ENCODE measurements at regions of chr3 and their contacts with region 1.

Region 1: DNA sequence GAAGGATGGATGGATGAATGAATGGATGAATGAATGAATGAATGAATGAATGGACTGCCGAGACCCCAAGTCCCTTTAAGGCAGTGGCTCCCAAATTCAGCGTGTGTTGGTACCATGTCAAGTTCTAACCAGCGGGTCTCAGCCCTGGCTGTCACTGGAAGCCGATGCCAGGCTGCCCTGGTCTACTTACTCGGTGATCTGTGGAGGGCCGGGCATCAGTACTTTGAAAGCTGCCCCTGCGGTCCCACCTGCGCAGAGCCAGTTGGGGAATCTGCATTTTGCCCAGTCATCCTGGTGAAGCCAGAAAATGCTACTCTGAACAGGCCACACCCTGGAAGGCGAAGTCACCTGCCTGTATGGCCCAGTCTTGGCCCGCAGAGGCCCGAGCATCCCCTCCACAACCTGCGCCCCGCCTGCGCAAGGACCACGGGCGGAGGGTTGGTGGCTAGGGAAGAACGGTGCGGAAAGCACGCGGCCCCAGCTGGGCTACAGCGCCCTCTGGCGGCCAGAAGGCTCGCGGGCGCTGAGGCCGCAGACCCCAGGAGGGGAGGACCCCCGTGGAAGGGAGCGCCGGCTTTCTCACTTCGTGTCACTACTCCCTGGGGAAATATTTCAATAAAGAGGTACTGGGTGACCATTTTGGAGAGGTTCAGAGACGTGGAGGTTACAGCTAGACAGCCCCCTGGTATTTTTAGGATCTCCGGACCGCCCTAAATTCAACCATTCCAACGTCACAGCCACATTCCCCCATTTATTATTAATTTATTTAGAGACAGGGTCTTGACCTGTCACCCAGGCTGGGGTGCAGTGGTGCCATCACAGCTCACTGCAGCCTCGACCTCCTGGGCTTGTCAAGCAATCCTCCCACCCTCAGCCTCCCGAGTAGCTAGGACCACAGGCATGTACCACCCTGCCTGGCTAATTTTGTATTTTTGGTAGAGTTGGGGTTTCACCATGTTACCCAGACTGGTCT is 34.9 kb downstream of the PRKCD start:
- DNase-seq: peak; percentile 43 to 82 (median 82)
- ATAC-seq: peak; percentile 53 to 78
- H3K4me3 ChIP-seq: no peak overlapping the region
- H3K27ac ChIP-seq: no peak overlapping the region
- H3K4me1 ChIP-seq: peaks cover 12% of the 10 kb centered on the region
- H3K27me3 ChIP-seq: no peaks in the 10 kb centered on the region

Region 2: GRCh38 chr3:53114011-53114400 is 81.9 kb before region 1 on chr3:
- intact Hi-C with region 1: loop called (anchors 1 to 5 kb)
- DNase-seq: peak; percentile 73 to 89 (median 84)
- ATAC-seq: peak; percentile 75 to 85
- H3K4me3 ChIP-seq: no peak overlapping the region
- H3K27ac ChIP-seq: peak overlapping the region; percentile 86
- H3K4me1 ChIP-seq: peaks cover 2% of the 10 kb centered on the region
- H3K27me3 ChIP-seq: no peaks in the 10 kb centered on the region

Region 3: DNA sequence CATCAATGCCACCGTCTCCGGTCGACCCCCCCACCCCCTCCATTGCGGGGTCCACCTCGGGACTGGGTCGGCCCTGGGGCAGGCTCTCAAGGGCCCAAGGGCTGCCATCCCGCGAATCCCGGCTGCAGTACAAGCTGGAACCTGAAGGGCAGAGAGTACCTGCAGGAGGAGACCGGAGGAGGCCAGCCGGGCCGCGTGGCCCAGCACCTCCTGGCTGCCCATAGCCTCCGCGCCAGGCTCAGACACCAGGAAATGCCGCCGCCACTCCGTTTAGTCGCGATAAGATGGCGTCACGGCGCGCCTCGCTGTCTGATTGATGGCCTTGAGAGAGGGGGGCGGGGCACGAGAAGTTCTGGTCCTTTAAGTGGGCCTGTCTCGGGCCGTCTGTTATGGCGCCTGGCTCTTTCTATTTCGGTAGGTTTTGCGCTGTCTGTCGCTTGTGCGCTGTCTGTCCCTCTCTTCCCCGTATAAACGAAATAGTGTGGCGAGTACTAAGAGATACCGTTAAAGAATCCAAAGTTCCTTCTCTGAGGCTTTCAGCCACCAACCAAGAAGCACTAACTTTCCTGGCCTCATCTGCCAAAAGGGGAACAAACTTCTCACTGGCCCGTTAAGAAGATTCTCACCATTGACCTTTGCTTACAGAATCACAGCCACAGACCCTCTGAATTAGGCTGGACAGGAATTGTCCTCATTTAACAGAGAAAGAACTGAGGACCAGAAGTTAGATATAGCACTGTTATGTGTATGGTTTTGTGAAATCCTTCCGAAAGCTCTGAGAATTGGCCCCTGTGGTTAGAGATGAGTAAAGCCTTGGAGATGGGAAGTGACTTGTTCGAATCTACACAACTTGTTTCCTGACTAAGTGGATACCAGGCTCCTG is 65.5 kb before region 1 on chr3 and contains the start of gene RFT1:
- intact Hi-C with region 1: loop called (anchors 5 kb)
- DNase-seq: peak; percentile 99 to 100 (median 99)
- ATAC-seq: peak; percentile 96 to 98
- H3K4me3 ChIP-seq: peak within 1 kb of the TSS; percentile 58
- H3K27ac ChIP-seq: peak within 1 kb of the TSS; percentile 92
- H3K4me1 ChIP-seq: peaks cover 4% of the 10 kb centered on the region
- H3K27me3 ChIP-seq: no peaks in the 10 kb centered on the region
- total RNA-seq, gene RFT1: 10.6 to 12.9 (median 12.6) TPM

Region 4: GRCh38 chr3:53231572-53232511 is 36.0 kb after region 1 on chr3:
- intact Hi-C with region 1: no loop called
- DNase-seq: peak in 1 of 3 donors; percentile 3
- ATAC-seq: no peak
- H3K4me3 ChIP-seq: no peak overlapping the region
- H3K27ac ChIP-seq: no peak overlapping the region
- H3K4me1 ChIP-seq: peaks cover 7% of the 10 kb centered on the region
- H3K27me3 ChIP-seq: no peaks in the 10 kb centered on the region

Region 5: GRCh38 chr3:53357457-53357856 is 161.6 kb after region 1 on chr3:
- intact Hi-C with region 1: no loop called
- DNase-seq: no peak
- ATAC-seq: no peak
- H3K4me3 ChIP-seq: no peak overlapping the region
- H3K27ac ChIP-seq: no peak overlapping the region
- H3K4me1 ChIP-seq: no peaks in the 10 kb centered on the region
- H3K27me3 ChIP-seq: no peaks in the 10 kb centered on the region

Measured in right cardiac atrium (tissue), 5 donors.